Upper lobe of right lung (tissue), 1 donor: ENCODE measurements at regions of chr21 and their contacts with region 1.

Region 1: GRCh38 chr21:46498335-46499050 is 39.8 kb downstream of the DIP2A start:
- DNase-seq: no peak
- ATAC-seq: no peak
- H3K4me3 ChIP-seq: no peak overlapping the region
- H3K27ac ChIP-seq: no peak overlapping the region
- H3K4me1 ChIP-seq: peaks cover 8% of the 10 kb centered on the region
- H3K27me3 ChIP-seq: no peaks in the 10 kb centered on the region
- CTCF ChIP-seq: no peak

Region 2: GRCh38 chr21:45643021-45643980 is 855.2 kb before region 1 on chr21 and contains the start of gene PCBP3:
- intact Hi-C with region 1: no loop called
- DNase-seq: peak; percentile 99
- ATAC-seq: peak; percentile 94
- H3K4me3 ChIP-seq: peak within 1 kb of the TSS; percentile 48
- H3K27ac ChIP-seq: no peak within 1 kb of the TSS
- H3K4me1 ChIP-seq: peaks cover 5% of the 10 kb centered on the region
- H3K27me3 ChIP-seq: peaks cover 12% of the 10 kb centered on the region
- CTCF ChIP-seq: no peak
- total RNA-seq, gene PCBP3: 3.8 TPM

Region 3: GRCh38 chr21:45874716-45875415 is 623.6 kb before region 1 on chr21:
- intact Hi-C with region 1: no loop called
- DNase-seq: peak; percentile 58
- ATAC-seq: peak; percentile 13
- H3K4me3 ChIP-seq: no peak overlapping the region
- H3K27ac ChIP-seq: no peak overlapping the region
- H3K4me1 ChIP-seq: no peaks in the 10 kb centered on the region
- H3K27me3 ChIP-seq: peaks cover 7% of the 10 kb centered on the region
- CTCF ChIP-seq: no peak

Region 4: DNA sequence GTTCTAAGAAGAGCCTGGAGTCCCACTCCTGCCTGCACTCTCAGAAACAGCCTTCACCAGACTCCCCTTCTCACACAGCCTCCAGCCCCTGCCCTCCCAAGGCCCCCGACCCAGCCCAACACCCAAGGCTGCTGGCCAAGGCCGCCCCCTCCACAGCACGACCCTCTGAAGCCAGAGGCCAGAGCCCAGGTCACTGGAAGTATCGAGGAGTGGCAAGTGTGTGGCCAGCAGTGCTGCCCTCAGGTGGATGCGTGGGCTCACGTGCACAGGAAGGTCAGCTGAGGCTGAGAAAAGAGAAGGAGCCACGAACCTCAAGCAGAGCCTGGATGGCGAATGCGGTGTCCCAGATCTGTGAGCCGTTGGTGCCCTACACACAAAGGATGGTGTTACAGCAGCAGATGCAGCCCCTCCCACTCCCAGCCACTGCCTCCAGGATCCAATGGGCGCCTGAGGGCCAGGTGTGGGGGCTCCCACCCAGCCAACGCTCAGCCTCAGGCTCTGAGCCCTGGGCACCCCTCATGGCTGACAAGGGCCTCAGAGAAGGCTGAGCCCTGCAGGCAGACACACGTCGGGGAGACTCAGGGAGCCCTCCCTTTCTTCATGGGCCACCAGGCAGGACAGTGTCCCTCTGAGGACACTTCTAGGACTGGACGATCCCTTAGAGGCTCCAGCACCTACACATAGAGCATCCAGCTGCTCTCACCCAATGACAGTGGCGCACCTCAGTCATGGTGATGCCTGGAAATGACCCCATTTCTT is 287.9 kb before region 1 on chr21:
- intact Hi-C with region 1: no loop called
- DNase-seq: peak; percentile 52
- ATAC-seq: no peak
- H3K4me3 ChIP-seq: no peak overlapping the region
- H3K27ac ChIP-seq: no peak overlapping the region
- H3K4me1 ChIP-seq: no peaks in the 10 kb centered on the region
- H3K27me3 ChIP-seq: no peaks in the 10 kb centered on the region
- CTCF ChIP-seq: no peak

Region 5: GRCh38 chr21:46545347-46545746 is 46.9 kb after region 1 on chr21:
- intact Hi-C with region 1: loop called (anchors 5 kb)
- DNase-seq: no peak
- ATAC-seq: peak; percentile 14
- H3K4me3 ChIP-seq: no peak overlapping the region
- H3K27ac ChIP-seq: no peak overlapping the region
- H3K4me1 ChIP-seq: no peaks in the 10 kb centered on the region
- H3K27me3 ChIP-seq: no peaks in the 10 kb centered on the region
- CTCF ChIP-seq: no peak

Region 6: DNA sequence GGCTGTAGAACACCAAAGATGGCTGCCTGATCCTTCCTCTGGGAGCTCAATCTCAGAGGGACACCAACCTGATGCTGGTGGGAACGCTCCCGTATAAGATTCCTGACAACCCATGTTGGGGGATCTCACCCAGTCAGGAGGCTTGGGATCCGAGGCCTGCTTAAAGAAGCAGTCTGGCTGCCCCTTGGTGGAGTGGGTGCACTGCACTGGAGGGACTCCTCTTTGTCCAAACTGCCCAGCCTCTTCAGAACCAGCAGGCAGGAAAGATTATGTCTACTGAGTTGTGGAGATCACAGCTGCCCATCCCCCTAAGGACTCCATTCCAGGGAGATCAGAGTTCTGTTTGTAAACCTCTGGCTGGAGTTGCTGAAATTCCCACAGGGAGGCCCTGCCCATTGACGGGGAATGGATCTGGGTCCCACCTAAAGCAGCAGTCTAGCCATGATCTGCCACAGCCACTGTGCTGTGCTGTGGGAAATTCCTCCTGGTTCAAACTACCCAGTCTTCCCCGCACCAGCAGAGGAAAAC is 83.4 kb after region 1 on chr21:
- intact Hi-C with region 1: no loop called
- DNase-seq: no peak
- ATAC-seq: no peak
- H3K4me3 ChIP-seq: no peak overlapping the region
- H3K27ac ChIP-seq: no peak overlapping the region
- H3K4me1 ChIP-seq: no peaks in the 10 kb centered on the region
- H3K27me3 ChIP-seq: no peaks in the 10 kb centered on the region
- CTCF ChIP-seq: no peak